ENCODE measurements at regions of chr2 and their contacts with region 1.

Region 1: DNA sequence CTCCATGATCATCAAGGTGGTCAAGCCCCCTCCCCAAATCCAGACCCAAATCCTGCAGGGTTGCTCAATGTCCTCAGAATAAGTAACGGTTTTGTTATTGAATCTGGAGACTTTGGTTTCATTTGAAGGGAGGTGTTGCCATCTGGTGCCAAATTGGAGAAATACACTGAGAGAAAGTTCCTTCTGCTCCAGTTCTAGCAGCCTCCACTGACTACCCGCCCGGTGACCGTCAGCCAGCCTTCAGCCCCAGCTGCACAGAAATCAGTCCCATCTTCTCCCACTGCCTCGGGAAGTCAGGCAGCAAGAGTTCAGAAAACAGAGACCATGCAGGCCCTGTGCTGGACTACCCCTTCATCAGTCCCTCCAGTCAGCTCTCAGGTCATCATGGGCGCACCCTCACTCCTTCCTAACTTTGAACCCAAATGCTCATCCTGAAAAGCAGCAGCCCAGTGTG is 38.7 kb downstream of the PKDCC start:
- DNase-seq: peak; percentile 87
- H3K4me3 ChIP-seq: no peak overlapping the region
- H3K27ac ChIP-seq: no peak overlapping the region
- H3K4me1 ChIP-seq: peaks cover 0 to 6% of the 10 kb centered on the region in 2 experiments; a peak in 2 of 4 replicates
- H3K27me3 ChIP-seq: no peaks in the 10 kb centered on the region
- CTCF ChIP-seq: peak; percentile 86
- EP300 ChIP-seq: no peak
- RAD21 ChIP-seq: peak; percentile 99

Region 2: DNA sequence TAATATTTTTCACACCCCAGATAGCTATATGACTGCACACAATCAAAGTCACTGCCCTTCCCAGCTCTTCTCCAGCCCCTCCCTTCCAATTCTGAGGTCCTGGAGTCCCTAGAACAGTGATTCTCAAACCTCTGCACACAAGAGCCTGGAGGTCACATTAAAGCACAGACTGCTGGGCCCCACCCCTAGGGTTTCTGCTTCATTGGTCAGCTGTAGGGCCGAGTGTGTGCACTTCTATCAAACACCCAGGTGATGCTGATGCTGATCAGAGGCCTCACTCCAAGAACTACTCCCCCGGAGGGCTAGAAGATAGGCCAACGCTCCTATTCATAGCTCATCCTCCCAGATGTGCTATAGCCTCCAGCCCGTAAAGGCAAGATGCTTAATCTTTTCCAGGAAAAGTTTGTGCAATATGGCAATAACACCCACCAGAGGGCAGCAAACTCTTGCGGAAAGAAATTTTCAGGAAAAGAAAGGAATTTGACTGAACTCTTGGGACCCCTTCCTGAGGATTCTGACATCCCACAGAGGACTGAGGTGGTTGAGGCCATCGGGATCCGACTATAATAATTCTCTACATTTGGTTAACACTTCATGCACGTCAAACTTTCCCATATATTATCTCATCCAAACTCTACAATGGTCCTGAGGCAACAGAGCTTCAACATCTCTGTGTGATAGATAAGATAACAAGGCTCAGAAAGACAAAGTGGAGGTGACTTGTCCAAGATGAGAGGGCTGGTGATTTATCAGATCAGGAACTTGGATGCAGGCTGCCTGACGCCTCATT is 232.9 kb before region 1 on chr2:
- CTCF ChIA-PET with region 1: interaction called, 446 read pairs
- POLR2A ChIA-PET with region 1: interaction called, 10 read pairs
- DNase-seq: peak; percentile 71
- H3K4me3 ChIP-seq: no peak overlapping the region
- H3K27ac ChIP-seq: no peak overlapping the region
- H3K4me1 ChIP-seq: peaks cover 0 to 7% of the 10 kb centered on the region in 2 experiments; a peak in 1 of 4 replicates
- H3K27me3 ChIP-seq: no peaks in the 10 kb centered on the region; the same call in 1 of the 2 replicates
- CTCF ChIP-seq: peak; percentile 91
- EP300 ChIP-seq: 0 out of 4 replicates have a peak, but pooled peaks of 1 of the 2 experiments have one; percentile 13
- RAD21 ChIP-seq: peak; percentile 99

Region 3: DNA sequence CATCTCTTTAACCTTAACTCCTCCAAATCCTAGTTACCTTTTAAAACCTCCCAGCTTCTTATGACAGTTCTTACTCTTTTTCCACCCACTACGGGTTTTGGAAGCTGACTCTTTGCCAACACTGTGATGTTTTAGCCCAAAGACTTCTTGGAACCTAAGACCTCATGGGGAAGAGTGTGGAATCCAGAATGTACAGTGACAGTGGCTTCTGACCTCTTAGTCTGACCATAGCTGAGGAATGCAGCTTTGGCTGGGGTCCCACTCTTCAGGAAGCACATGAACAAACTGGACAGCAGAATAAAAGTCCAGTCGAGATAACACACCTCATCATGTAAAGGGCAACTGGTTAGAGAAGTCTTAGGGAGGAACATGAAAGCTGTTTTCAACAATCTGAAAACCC is 199.8 kb before region 1 on chr2:
- CTCF ChIA-PET with region 1: interaction called, 29 read pairs
- POLR2A ChIA-PET with region 1: no interaction called
- DNase-seq: no peak
- H3K4me3 ChIP-seq: no peak overlapping the region
- H3K27ac ChIP-seq: peak overlapping the region in 1 of 2 experiments; percentile 100; a peak in 2 of 4 replicates
- H3K4me1 ChIP-seq: peaks cover 0 to 23% of the 10 kb centered on the region in 2 experiments; a peak in 2 of 4 replicates
- H3K27me3 ChIP-seq: peaks cover 5% of the 10 kb centered on the region; the same call in 1 of the 2 replicates
- CTCF ChIP-seq: no peak
- EP300 ChIP-seq: no peak
- RAD21 ChIP-seq: no peak

Region 4: GRCh38 chr2:41933585-41934320 is 152.8 kb before region 1 on chr2:
- CTCF ChIA-PET with region 1: interaction called, 38 read pairs
- POLR2A ChIA-PET with region 1: no interaction called
- DNase-seq: no peak
- H3K4me3 ChIP-seq: no peak overlapping the region
- H3K27ac ChIP-seq: no peak overlapping the region
- H3K4me1 ChIP-seq: peaks cover 13 to 50% of the 10 kb centered on the region in 2 experiments; a peak in 3 of 4 replicates
- H3K27me3 ChIP-seq: no peaks in the 10 kb centered on the region
- CTCF ChIP-seq: no peak
- EP300 ChIP-seq: no peak
- RAD21 ChIP-seq: no peak

Region 5: DNA sequence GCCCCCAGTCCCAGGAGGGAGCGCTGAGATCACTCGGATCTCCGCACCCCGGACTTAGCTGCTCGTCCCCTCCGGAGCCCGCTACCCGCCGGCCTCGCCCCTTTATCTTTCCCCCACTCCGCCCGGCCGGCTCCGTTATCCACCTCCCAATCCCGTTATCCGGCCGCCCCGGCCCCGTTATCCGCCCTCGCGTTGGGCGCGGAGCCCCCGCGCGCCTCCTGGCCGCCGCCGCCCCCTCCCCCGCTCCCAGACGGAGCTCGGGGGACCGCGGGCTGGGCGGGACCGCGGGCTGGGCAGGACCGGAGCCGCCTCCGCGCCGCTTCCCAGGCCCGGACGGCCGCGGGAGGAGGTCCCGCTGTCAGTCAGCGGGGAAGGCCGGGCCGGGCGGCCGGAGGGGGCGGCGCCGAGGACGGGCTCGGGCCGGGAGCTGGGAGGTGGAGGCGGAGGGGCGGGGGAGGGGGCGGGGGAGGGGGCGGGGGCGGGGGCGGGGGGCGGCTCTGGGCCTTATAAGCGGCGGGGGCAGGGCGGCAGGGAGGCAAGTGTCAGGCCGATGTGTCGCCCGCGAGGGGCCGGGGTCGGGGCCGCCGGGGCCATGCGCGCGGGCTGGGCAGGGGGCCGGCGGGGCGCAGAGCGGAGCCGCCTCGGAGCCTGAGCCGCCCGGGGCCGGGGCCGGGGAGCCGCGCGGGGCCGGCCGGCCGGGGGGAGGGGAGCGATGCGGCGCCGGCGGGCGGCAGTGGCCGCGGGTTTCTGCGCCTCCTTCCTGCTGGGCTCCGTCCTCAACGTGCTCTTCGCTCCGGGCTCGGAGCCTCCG is 38.8 kb before region 1 on chr2 and contains the start of gene PKDCC:
- CTCF ChIA-PET with region 1: interaction called, 116 read pairs
- POLR2A ChIA-PET with region 1: interaction called, 4 read pairs
- DNase-seq: peak; percentile 100
- H3K4me3 ChIP-seq: peak within 1 kb of the TSS; percentile 81 to 85
- H3K27ac ChIP-seq: peak within 1 kb of the TSS; percentile 5 to 100; a peak in 3 of 4 replicates
- H3K4me1 ChIP-seq: peaks cover 0 to 67% of the 10 kb centered on the region in 2 experiments; a peak in 2 of 4 replicates
- H3K27me3 ChIP-seq: 0 out of 2 replicates have a peak, but pooled peaks cover 8% of the 10 kb centered on the region
- CTCF ChIP-seq: no peak
- EP300 ChIP-seq: no peak
- RAD21 ChIP-seq: no peak
- polyA plus RNA-seq, gene PKDCC: 16.0 and 19.5 TPM in 2 replicates

Region 6: GRCh38 chr2:42072349-42073118 is 14.0 kb before region 1 on chr2:
- CTCF ChIA-PET with region 1: interaction called, 156 read pairs
- POLR2A ChIA-PET with region 1: interaction called, 3 read pairs
- DNase-seq: peak; percentile 80
- H3K4me3 ChIP-seq: no peak overlapping the region
- H3K27ac ChIP-seq: peak overlapping the region in 1 of 2 experiments; percentile 76; a peak in 2 of 4 replicates
- H3K4me1 ChIP-seq: peaks cover 0 to 49% of the 10 kb centered on the region in 2 experiments; a peak in 1 of 4 replicates
- H3K27me3 ChIP-seq: peaks cover 17% of the 10 kb centered on the region
- CTCF ChIP-seq: no peak
- EP300 ChIP-seq: peak in 1 of 2 experiments; percentile 5; a peak in 2 of 4 replicates
- RAD21 ChIP-seq: peak; percentile 39

Region 7: GRCh38 chr2:42256505-42256904 is 170.0 kb after region 1 on chr2:
- CTCF ChIA-PET with region 1: no interaction called
- POLR2A ChIA-PET with region 1: no interaction called
- DNase-seq: no peak
- H3K4me3 ChIP-seq: no peak overlapping the region
- H3K27ac ChIP-seq: no peak overlapping the region
- H3K4me1 ChIP-seq: peaks cover 0 to 2% of the 10 kb centered on the region in 2 experiments; a peak in 2 of 4 replicates
- H3K27me3 ChIP-seq: no peaks in the 10 kb centered on the region
- CTCF ChIP-seq: no peak
- EP300 ChIP-seq: no peak
- RAD21 ChIP-seq: no peak

Region 8: DNA sequence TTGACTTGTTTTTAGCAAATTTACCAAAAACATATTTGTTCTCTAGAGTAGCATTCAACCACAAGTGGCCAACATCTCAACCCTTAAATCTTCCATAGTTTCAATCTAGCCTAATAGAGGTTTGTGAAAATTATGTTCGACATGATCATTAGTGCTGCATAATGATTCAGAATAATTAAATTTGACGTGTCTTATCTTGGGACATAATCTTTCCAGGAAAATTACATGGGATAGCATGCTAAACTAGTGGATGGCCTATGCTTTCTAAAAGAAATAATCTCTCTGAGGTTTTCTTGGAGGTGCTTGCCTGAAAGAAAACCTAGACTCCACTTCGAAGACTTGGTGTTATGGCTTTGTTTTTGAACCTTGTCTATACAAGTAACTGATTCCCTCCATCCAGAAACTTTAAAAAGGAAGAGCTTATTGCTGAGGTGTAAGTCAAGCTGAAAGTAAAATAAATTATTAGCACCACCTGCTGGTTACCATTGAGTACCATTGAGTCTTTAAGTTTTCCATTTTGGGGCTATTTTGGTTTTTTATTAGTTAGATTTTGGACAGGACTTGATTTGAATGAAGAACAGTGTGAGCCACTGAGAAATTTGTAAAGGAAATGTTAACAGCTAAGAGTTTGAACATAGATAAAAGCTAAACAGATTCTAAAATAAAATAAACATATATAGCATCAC is 241.8 kb after region 1 on chr2:
- CTCF ChIA-PET with region 1: interaction called, 28 read pairs
- POLR2A ChIA-PET with region 1: interaction called, 5 read pairs
- DNase-seq: no peak
- H3K4me3 ChIP-seq: no peak overlapping the region
- H3K27ac ChIP-seq: peak overlapping the region in 1 of 2 experiments; percentile 34; a peak in 2 of 4 replicates
- H3K4me1 ChIP-seq: no peaks in the 10 kb centered on the region; a peak in 1 of 4 replicates
- H3K27me3 ChIP-seq: no peaks in the 10 kb centered on the region
- CTCF ChIP-seq: peak; percentile 82
- EP300 ChIP-seq: no peak
- RAD21 ChIP-seq: peak; percentile 70

Region 9: DNA sequence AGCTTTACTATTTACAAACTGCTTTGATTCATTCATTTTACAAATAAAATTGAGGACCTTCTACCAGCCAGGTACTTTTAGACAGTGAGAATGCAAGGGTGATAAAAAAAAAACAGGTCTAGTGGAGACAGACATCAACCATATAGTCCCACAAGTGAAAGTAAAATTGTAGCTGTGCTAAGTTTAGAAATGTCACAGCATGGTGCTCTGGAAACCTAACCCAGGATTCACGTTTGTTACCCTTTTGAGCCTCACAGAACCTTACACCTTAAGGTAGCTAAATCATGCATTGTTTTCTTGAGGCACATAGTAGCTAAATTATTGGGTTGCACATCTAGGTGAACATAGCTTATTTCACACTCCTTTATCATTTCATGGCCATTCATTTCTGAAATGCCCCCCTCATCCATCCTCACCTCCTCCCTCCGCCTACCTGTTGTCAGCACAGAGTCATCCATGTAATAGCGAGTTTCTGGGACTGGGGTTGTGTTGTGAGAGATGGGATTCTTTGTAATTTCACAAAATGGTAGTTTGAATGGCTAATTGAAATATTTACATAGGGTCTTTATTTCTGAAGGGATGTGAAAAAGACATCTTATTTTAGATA is 489.0 kb after region 1 on chr2:
- CTCF ChIA-PET with region 1: no interaction called
- POLR2A ChIA-PET with region 1: no interaction called
- DNase-seq: no peak
- H3K4me3 ChIP-seq: no peak overlapping the region
- H3K27ac ChIP-seq: no peak overlapping the region
- H3K4me1 ChIP-seq: peaks cover 0 to 2% of the 10 kb centered on the region in 2 experiments; a peak in 1 of 4 replicates
- H3K27me3 ChIP-seq: no peaks in the 10 kb centered on the region
- CTCF ChIP-seq: no peak
- EP300 ChIP-seq: no peak
- RAD21 ChIP-seq: no peak